Dendritic cell treated with granulocyte-macrophage colony-stimulating factor and Interleukin-4, amounts not matched to agents 40 ng/mL and 50 ng/mL, for 4 days (primary cell): ENCODE measurements at regions of chr9 and their contacts with region 1.

Region 1: DNA sequence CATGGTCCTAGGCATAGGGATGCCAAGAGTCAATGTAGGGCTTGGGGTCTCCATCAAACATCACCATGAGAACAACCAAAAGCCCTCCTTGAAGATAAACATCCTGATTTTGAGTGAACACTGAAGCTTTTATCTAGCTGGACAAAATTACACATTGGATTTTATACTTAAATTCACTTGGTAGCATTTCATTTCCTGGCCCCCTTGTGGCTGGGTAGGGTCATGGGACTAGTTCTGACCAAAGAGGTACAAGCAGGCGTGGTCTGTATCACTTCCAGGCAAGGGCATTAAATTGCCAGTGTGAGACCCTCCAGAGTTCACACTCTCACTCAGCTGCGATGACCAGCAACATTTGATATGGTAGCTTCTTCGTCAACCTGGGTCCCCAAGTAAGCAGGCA is 320.3 kb downstream of the ACTL7B start:
- H3K4me3 Mint-ChIP-seq: no peak overlapping the region
- H3K27ac Mint-ChIP-seq: no peak overlapping the region
- H3K4me1 Mint-ChIP-seq: peaks cover 14% of the 10 kb centered on the region
- H3K27me3 Mint-ChIP-seq: peaks cover 5% of the 10 kb centered on the region

Region 2: DNA sequence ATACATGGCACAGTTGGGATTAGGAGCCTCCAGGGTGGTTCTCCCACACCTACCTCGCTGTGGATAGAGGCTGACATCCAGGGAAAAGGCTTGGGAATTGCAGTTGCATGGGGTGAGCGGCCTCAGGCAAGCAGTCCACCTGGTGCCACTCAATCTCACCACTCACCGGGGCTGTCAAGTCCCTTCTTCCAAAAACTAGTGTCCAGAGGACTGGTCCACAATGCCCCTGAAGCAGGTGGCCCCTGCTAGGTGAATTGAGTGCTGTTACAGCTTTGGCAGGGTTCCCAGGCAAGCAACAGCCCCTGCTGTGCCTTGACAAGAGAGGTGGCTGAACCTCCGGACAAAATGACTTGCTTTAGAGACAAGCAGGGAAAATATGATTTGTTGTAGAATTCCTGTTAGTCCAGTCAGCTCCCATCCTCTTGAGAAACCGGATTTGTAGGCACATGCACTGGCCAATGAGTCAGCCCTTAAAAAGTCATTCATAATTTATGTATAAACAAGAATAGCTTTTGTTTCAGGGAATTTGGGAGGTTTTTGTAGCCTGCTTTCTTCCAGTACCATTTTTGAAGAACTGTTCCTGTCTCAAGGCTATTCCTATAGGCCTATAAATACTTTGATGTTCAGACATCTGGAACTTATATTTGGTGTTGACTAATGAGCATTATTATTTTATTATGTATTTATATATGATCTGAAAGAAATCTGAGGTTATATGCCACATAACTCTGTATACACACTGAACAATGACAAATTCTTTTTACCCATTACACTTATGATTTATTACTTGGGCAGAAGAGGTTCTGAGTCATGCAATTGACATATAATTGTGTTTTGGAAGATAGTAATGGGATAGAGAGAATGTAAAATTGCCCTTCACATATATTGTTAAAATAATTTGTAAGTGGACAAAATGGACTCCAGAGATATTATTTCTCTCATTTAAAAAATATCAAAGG is 90.8 kb before region 1 on chr9:
- intact Hi-C with region 1: no loop called
- H3K4me3 Mint-ChIP-seq: no peak overlapping the region
- H3K27ac Mint-ChIP-seq: no peak overlapping the region
- H3K4me1 Mint-ChIP-seq: no peaks in the 10 kb centered on the region
- H3K27me3 Mint-ChIP-seq: peaks cover 5% of the 10 kb centered on the region

Region 3: GRCh38 chr9:108468402-108468801 is 67.1 kb before region 1 on chr9:
- intact Hi-C with region 1: loop called (anchors 5 kb)
- H3K4me3 Mint-ChIP-seq: no peak overlapping the region
- H3K27ac Mint-ChIP-seq: no peak overlapping the region
- H3K4me1 Mint-ChIP-seq: peaks cover 13% of the 10 kb centered on the region
- H3K27me3 Mint-ChIP-seq: peaks cover 5% of the 10 kb centered on the region